Heart right ventricle (tissue), 16 donors: ENCODE measurements at regions of chr1 and their contacts with region 1.

Region 1: GRCh38 chr1:65687428-65688214 is 105.1 kb upstream of the PDE4B start:
- DNase-seq: peak; percentile 81 to 88
- ATAC-seq: peak; percentile 68 to 95 (median 90)
- H3K4me3 ChIP-seq: no peak overlapping the region
- H3K27ac ChIP-seq: peak overlapping the region in 1 of 10 donors; percentile 31
- H3K4me1 ChIP-seq: peaks cover 0 to 33% (median 26%) of the 10 kb centered on the region in 9 donors
- H3K27me3 ChIP-seq: peaks cover 0 to 7% (median 0%) of the 10 kb centered on the region in 7 donors
- CTCF ChIP-seq: peak; percentile 91 to 99 (median 96)

Region 2: GRCh38 chr1:65075123-65075976 is 612.3 kb before region 1 on chr1:
- intact Hi-C with region 1: loop called in 1 of 10 experiments (anchors 10 kb)
- DNase-seq: peak in 1 of 2 donors; percentile 68
- ATAC-seq: peak; percentile 50 to 84 (median 80)
- H3K4me3 ChIP-seq: no peak overlapping the region
- H3K27ac ChIP-seq: no peak overlapping the region
- H3K4me1 ChIP-seq: no peaks in the 10 kb centered on the region
- H3K27me3 ChIP-seq: no peaks in the 10 kb centered on the region
- CTCF ChIP-seq: peak; percentile 56 to 86 (median 78)

Region 3: GRCh38 chr1:65230731-65231481 is 456.7 kb before region 1 on chr1:
- intact Hi-C with region 1: loop called (anchors 1 to 5 kb)
- DNase-seq: no peak
- ATAC-seq: no peak
- H3K4me3 ChIP-seq: no peak overlapping the region
- H3K27ac ChIP-seq: no peak overlapping the region
- H3K4me1 ChIP-seq: peaks cover 0 to 24% (median 0%) of the 10 kb centered on the region in 9 donors
- H3K27me3 ChIP-seq: no peaks in the 10 kb centered on the region
- CTCF ChIP-seq: no peak

Region 4: DNA sequence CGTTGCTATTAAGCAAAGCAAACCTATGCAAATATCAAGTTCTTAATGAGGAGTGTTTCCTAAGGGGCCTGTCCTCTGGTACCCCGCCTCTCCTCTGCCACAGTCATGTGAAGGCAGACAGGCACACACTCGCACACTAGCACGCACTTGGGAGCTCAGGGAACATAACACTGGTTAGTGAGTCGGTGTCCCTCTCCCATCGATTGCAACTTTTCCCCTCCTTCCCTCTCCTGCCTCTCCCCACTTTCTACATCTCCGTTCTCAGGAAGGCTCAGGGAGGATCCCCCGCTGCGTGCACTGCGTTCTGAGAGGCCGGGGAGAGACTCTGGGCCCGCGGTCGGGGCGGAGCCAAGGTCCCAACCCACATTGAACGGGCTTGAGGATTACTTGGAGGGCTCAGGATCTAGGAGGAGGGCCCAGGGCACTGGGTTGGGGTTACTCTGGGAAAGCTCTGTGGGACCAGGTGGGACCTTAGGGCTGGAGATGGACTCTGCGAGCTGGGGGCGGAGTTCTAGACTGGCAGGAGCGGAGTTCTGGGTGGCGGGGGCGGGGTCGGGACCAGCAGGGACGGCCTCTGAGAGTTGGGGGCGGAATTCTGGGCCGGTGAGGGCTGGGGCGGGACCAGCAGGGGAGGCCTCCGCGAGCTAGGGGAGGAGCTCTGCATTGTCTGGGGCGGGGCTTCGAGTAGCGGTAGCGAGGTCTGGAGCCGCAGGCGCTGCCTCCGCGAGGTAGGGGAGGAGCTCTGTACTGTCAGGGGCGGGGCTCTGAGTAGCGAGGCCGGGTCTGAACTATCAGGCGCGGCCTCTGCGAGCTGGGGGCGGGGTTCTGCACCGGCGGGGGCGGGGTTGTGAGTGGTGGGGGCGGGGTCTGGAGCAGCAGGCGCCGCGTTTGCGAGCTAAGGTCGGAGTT is 267.7 kb before region 1 on chr1:
- intact Hi-C with region 1: loop called in 2 of 10 experiments (anchors 5 to 10 kb)
- DNase-seq: peak; percentile 98 to 99
- ATAC-seq: peak; percentile 96 to 99 (median 98)
- H3K4me3 ChIP-seq: peak overlapping the region; percentile 50 to 96 (median 82)
- H3K27ac ChIP-seq: peak overlapping the region; percentile 89 to 99 (median 98)
- H3K4me1 ChIP-seq: peaks cover 0 to 40% (median 34%) of the 10 kb centered on the region in 9 donors
- H3K27me3 ChIP-seq: no peaks in the 10 kb centered on the region
- CTCF ChIP-seq: no peak

Region 5: DNA sequence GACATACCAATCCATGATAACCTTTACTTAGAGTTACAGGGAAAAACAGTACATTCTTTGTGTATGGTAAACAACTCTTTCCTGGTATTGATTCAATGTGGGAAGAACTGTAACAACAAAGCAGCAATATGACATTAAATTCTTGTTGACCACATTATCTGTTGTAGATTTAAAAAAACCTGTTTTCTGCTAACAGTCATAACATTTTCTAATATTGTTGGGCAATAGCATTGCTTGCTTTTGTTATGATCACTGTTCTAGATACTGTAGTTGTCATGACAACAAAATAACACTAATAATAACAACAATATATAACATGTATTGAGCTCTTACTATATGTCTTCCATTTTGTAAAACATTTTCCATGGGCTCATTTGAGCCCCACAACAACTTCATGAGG is 159.2 kb after region 1 on chr1:
- intact Hi-C with region 1: no loop called
- DNase-seq: no peak
- ATAC-seq: no peak
- H3K4me3 ChIP-seq: no peak overlapping the region
- H3K27ac ChIP-seq: no peak overlapping the region
- H3K4me1 ChIP-seq: no peaks in the 10 kb centered on the region
- H3K27me3 ChIP-seq: no peaks in the 10 kb centered on the region
- CTCF ChIP-seq: no peak